ENCODE measurements at regions of chr1 and their contacts with region 1.

Region 1: GRCh38 chr1:33256701-33257399 is 558 bp downstream of the ZNF362 start:
- DNase-seq: peak in 8 of 9 donors; percentile 41 to 68 (median 62)
- ATAC-seq: peak; percentile 80
- H3K4me3 ChIP-seq: peak overlapping the region; percentile 84
- H3K4me3 Mint-ChIP-seq: peak overlapping the region; percentile 97 to 100 (median 99)
- H3K27ac ChIP-seq: peak overlapping the region; percentile 74
- H3K27ac Mint-ChIP-seq: peak overlapping the region; percentile 97 to 99 (median 98)
- H3K4me1 ChIP-seq: peaks cover 16 to 31% of the 10 kb centered on the region in 2 donors
- H3K4me1 Mint-ChIP-seq: peaks cover 29 to 47% (median 42%) of the 10 kb centered on the region in 7 donors
- H3K27me3 ChIP-seq: no peaks in the 10 kb centered on the region
- H3K27me3 Mint-ChIP-seq: peaks cover 0 to under 1% (median 0%) of the 10 kb centered on the region in 5 donors

Region 2: GRCh38 chr1:33237206-33237978 is 19.5 kb before region 1 on chr1:
- CTCF ChIA-PET with region 1: no interaction called
- POLR2A ChIA-PET with region 1: interaction called, 4 read pairs
- intact Hi-C with region 1: loop called in 1 of 2 experiments (anchors 2 kb)
- DNase-seq: peak in 7 of 9 donors; percentile 38 to 62 (median 47)
- ATAC-seq: peak; percentile 93
- H3K4me3 ChIP-seq: no peak overlapping the region
- H3K4me3 Mint-ChIP-seq: peak overlapping the region in 7 of 10 donors; percentile 16 to 66 (median 46)
- H3K27ac ChIP-seq: no peak overlapping the region
- H3K27ac Mint-ChIP-seq: peak overlapping the region in 3 of 9 donors; percentile 33 to 76 (median 42)
- H3K4me1 ChIP-seq: no peaks in the 10 kb centered on the region
- H3K4me1 Mint-ChIP-seq: peaks cover 0 to 6% (median 6%) of the 10 kb centered on the region in 7 donors
- H3K27me3 ChIP-seq: no peaks in the 10 kb centered on the region
- H3K27me3 Mint-ChIP-seq: peaks cover 0 to 14% (median 7%) of the 10 kb centered on the region in 5 donors